WTC11 (cell line): ENCODE measurements at regions of chrX and their contacts with region 1.

Region 1: DNA sequence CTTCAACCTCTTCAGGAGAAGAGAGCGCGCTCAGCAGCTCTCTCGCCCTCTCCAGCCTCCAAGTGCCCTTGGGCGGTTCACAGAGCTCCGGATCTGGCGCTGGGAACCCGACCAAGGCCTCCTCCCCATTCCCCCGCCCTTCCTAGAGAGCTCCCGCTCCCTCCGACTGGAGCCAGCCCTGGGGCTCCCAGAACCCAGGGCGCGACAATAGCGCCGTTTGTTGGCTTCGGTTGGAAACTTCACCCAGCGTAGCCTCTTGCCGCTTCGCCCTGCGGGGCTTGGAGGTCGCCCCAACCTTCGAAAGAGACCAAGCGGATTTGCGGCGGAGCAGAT is 3.1 kb upstream of the SOX3 start:
- DNase-seq: peak; percentile 81
- ATAC-seq: peak; percentile 61
- H3K4me3 Mint-ChIP-seq: peak overlapping the region; percentile 77
- H3K27ac Mint-ChIP-seq: no peak overlapping the region
- H3K4me1 Mint-ChIP-seq: peaks cover 29% of the 10 kb centered on the region
- H3K27me3 Mint-ChIP-seq: peaks cover 84% of the 10 kb centered on the region
- CTCF ChIP-seq: no peak

Region 2: GRCh38 chrX:140034916-140035315 is 473.0 kb before region 1 on chrX:
- CTCF ChIA-PET with region 1: interaction called, 21 read pairs
- POLR2A ChIA-PET with region 1: no interaction called
- DNase-seq: no peak
- ATAC-seq: no peak
- H3K4me3 Mint-ChIP-seq: no peak overlapping the region
- H3K27ac Mint-ChIP-seq: no peak overlapping the region
- H3K4me1 Mint-ChIP-seq: peaks cover 5% of the 10 kb centered on the region
- H3K27me3 Mint-ChIP-seq: no peaks in the 10 kb centered on the region; the same call in 1 of the 2 replicates
- CTCF ChIP-seq: no peak

Region 3: DNA sequence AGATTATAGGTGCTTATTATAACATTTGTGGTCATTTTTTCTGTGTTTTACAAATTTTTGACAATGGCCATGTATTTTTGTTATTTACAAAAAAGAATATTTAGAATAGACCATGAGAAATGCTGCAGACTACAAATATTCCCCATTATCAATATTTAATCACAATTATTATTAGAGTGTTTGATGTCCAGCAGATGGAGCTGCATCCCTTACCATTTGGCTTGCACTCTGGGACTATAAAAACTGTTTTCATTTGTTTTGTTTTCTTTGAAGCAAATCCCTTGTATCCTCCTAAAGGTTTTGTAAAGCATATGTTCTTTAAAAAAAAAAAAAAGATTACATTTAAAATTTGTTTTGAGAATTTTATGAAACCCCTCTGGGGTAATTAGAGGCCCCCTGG is 457.1 kb before region 1 on chrX:
- CTCF ChIA-PET with region 1: interaction called, 16 read pairs
- POLR2A ChIA-PET with region 1: no interaction called
- DNase-seq: no peak
- ATAC-seq: no peak
- H3K4me3 Mint-ChIP-seq: no peak overlapping the region
- H3K27ac Mint-ChIP-seq: no peak overlapping the region
- H3K4me1 Mint-ChIP-seq: peaks cover 31% of the 10 kb centered on the region
- H3K27me3 Mint-ChIP-seq: no peaks in the 10 kb centered on the region; the same call in 1 of the 2 replicates
- CTCF ChIP-seq: no peak

Region 4: DNA sequence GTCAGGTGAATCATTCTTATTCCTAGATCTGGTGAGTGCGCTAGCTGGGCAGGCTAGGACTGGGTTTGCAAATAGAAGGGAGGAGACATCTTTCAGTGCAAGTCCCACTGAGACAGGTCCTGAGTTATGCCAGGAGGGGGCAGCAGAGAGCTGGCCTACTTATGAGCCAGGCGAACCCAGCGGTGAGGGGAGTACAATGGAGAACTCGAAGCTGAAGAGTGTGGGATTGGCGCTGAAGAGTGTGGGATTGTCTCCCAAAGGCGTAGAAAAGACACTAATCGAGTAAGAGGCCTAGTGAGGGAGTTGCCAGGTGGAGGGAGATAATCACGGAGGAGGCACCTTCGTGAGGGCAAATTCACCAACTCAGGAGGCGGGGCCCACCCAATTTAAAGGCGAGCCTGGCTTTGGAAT is 451.0 kb before region 1 on chrX:
- CTCF ChIA-PET with region 1: interaction called, 29 read pairs
- POLR2A ChIA-PET with region 1: no interaction called
- DNase-seq: peak; percentile 79
- ATAC-seq: peak; percentile 96
- H3K4me3 Mint-ChIP-seq: no peak overlapping the region
- H3K27ac Mint-ChIP-seq: no peak overlapping the region
- H3K4me1 Mint-ChIP-seq: peaks cover 38% of the 10 kb centered on the region
- H3K27me3 Mint-ChIP-seq: peaks cover 4% of the 10 kb centered on the region
- CTCF ChIP-seq: peak; percentile 77

Region 5: GRCh38 chrX:140141444-140142029 is 366.4 kb before region 1 on chrX:
- CTCF ChIA-PET with region 1: interaction called, 12 read pairs
- POLR2A ChIA-PET with region 1: no interaction called
- DNase-seq: peak; percentile 28
- ATAC-seq: peak; percentile 56
- H3K4me3 Mint-ChIP-seq: no peak overlapping the region
- H3K27ac Mint-ChIP-seq: no peak overlapping the region
- H3K4me1 Mint-ChIP-seq: 0 out of 2 replicates have a peak, but pooled peaks cover 2% of the 10 kb centered on the region
- H3K27me3 Mint-ChIP-seq: no peaks in the 10 kb centered on the region
- CTCF ChIP-seq: peak; percentile 35; the same call in 1 of the 2 replicates

Region 6: DNA sequence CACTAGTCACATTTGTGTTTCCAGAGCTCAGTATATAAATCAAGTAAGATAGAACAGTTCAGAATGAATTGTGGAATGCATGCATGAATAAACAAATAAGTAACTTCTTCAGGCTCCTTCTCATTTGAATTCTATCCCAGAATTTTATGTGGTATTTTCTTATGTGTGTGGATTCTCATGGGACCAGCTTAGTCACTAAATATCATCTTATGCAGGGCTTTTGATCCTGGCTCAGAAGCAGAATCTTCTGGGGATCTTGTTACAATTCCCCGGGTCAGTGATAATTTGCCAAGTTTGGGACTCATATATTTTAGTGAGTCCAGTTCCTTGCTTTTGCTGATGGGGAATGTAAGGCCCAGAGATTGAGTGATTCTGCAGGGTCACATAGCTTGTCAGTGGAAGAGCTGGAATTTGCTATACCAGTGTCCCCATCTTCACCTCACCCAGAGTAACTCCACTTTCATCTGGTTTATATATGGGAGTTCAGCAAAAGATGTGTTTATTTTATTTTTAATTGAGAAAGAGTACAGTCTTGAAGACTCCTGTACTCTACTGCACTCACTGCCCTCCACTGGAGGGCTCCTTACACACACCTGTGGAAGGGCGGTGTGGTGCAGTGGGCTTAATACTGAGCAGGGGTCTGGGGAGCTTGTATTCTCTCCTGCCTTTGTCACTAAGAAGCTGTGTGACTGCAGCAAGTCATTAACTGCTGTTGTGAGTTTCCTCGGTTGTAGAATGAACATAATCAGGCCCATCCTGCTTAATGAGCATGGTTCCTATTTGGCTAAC is 344.4 kb before region 1 on chrX:
- CTCF ChIA-PET with region 1: interaction called, 18 read pairs
- POLR2A ChIA-PET with region 1: no interaction called
- DNase-seq: no peak
- ATAC-seq: peak; percentile 73
- H3K4me3 Mint-ChIP-seq: no peak overlapping the region
- H3K27ac Mint-ChIP-seq: no peak overlapping the region
- H3K4me1 Mint-ChIP-seq: peaks cover 4% of the 10 kb centered on the region
- H3K27me3 Mint-ChIP-seq: no peaks in the 10 kb centered on the region
- CTCF ChIP-seq: no peak